ENCODE measurements at regions of chr7 and their contacts with region 1.

Region 1: GRCh38 chr7:32803406-32804141 is 88.0 kb downstream of the KBTBD2 start:
- DNase-seq: no peak
- ATAC-seq: no peak
- H3K4me3 ChIP-seq: no peak overlapping the region
- H3K27ac ChIP-seq: no peak overlapping the region
- H3K4me1 ChIP-seq: no peaks in the 10 kb centered on the region
- H3K27me3 ChIP-seq: no peaks in the 10 kb centered on the region

Region 2: GRCh38 chr7:33050535-33051318 is 247.2 kb after region 1 on chr7:
- intact Hi-C with region 1: loop called in 1 of 4 experiments (anchors 10 kb)
- DNase-seq: no peak
- ATAC-seq: peak; percentile 38 to 47
- H3K4me3 ChIP-seq: no peak overlapping the region
- H3K27ac ChIP-seq: no peak overlapping the region
- H3K4me1 ChIP-seq: peaks cover 2% of the 10 kb centered on the region
- H3K27me3 ChIP-seq: no peaks in the 10 kb centered on the region

Region 3: GRCh38 chr7:33109005-33109757 is 305.6 kb after region 1 on chr7 and contains the start of gene RP9:
- intact Hi-C with region 1: loop called in 1 of 4 experiments (anchors 10 kb)
- DNase-seq: peak; percentile 68 to 90 (median 89)
- ATAC-seq: peak; percentile 90 to 92
- H3K4me3 ChIP-seq: peak within 1 kb of the TSS; percentile 98
- H3K27ac ChIP-seq: peak within 1 kb of the TSS; percentile 89
- H3K4me1 ChIP-seq: peaks cover 2% of the 10 kb centered on the region
- H3K27me3 ChIP-seq: no peaks in the 10 kb centered on the region
- total RNA-seq, gene RP9: 15.2 to 19.7 (median 15.6) TPM